Spleen (tissue), 13 donors: ENCODE measurements at regions of chr6 and their contacts with region 1.

Region 1: DNA sequence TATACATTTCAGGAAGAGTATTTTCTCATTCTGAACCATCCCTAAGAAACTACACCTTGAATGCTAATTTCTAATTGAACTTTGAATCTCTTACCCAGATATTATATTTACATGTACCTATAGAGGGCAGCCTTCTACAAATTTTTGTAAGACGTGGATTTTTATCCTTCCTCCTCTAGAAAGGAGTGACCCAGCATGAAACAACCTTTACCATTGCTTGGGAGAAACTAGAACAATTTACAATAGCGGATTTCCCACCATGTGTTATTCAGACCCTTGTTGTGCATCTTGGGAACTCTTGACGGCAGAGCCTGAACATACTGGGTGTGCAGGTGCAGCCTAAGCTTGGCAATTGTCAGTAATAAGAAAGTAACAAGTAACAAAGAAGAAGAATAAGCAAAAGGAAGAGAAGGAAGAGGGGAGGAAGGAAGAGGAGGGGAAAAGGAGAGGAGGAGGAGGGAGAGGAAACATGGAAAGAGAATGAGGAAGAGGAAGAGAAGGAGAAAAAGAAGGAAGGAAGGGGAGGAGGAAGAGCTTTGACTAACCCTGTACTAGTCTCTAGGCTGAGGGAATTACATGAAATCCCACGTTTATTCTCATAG is 10.8 kb upstream of the TAAR1 start:
- DNase-seq: no peak
- H3K4me3 ChIP-seq: peak overlapping the region in 1 of 8 donors; percentile 28
- H3K27ac ChIP-seq: peak overlapping the region in 4 of 8 donors; percentile 62 to 76 (median 70)
- H3K4me1 ChIP-seq: peaks cover 0 to 13% (median 7%) of the 10 kb centered on the region in 6 donors
- H3K27me3 ChIP-seq: no peaks in the 10 kb centered on the region
- CTCF ChIP-seq: peak in 10 of 11 experiments; percentile 10 to 61 (median 52)
- POLR2A ChIP-seq: no peak

Region 2: DNA sequence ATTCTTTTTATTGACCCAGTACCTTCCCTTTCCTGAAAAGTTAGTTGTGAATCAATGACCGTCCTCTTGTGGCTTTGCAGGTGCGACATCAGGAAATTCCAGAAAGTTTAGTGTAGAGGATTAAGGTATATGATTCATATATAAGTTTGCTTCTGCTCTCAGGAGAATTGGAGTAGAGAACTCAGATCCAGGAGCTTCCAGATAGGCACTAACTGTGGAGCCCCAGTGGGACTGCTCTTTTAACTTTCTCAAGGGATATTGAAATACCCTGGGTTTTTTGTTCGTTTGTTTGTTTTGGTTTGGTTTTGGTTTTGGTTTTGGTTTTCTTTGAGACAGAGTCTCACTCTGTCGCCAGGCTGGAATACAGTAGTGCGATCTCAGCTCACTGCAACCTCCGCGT is 55.2 kb before region 1 on chr6:
- intact Hi-C with region 1: no loop called
- DNase-seq: no peak
- H3K4me3 ChIP-seq: peak overlapping the region in 5 of 8 donors; percentile 3 to 54 (median 13)
- H3K27ac ChIP-seq: peak overlapping the region in 2 of 8 donors; percentile 22 to 27
- H3K4me1 ChIP-seq: peaks cover 0 to 14% (median 0%) of the 10 kb centered on the region in 6 donors
- H3K27me3 ChIP-seq: no peaks in the 10 kb centered on the region
- CTCF ChIP-seq: no peak
- POLR2A ChIP-seq: no peak

Region 3: DNA sequence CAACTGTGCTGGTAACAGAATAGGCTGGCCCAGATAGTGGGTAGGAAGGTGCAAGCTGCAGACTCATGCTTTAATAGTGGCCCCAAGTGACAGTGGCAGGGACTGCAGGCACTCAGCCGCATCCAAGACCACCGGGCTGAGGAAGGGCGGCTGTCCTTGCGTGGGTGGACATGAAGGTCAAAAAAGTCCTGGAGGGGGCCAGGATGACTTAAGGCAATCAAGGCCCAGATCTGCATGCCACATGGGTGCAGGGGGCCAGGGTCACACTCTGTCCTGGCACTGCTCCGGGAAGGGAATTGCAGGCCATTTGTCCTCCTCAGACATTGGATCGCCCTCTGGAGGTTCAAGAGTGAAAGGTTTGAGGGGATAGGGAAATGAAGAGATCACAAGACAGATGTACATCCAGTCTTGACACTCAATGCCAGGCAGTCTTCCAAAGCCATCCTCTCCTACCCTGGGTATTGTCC is 98.3 kb after region 1 on chr6:
- intact Hi-C with region 1: loop called (anchors 10 kb)
- DNase-seq: peak; percentile 82
- H3K4me3 ChIP-seq: peak overlapping the region in 1 of 8 donors; percentile 42
- H3K27ac ChIP-seq: peak overlapping the region in 2 of 8 donors; percentile 9 to 32
- H3K4me1 ChIP-seq: peaks cover 2 to 22% (median 10%) of the 10 kb centered on the region in 6 donors
- H3K27me3 ChIP-seq: no peaks in the 10 kb centered on the region
- CTCF ChIP-seq: peak in 10 of 11 experiments; percentile 37 to 84 (median 62)
- POLR2A ChIP-seq: no peak